Panc1 (cell line): ENCODE measurements at regions of chr3 and their contacts with region 1.

Region 1: GRCh38 chr3:47522082-47522987 is 8.8 kb upstream of the ELP6 start:
- DNase-seq: peak; percentile 68
- ATAC-seq: peak; percentile 95
- H3K4me3 ChIP-seq: no peak overlapping the region
- H3K27ac ChIP-seq: no peak overlapping the region
- H3K4me1 ChIP-seq: no peaks in the 10 kb centered on the region
- H3K27me3 ChIP-seq: no peaks in the 10 kb centered on the region
- CTCF ChIP-seq: peak; percentile 83

Region 2: GRCh38 chr3:47594792-47595191 is 72.5 kb after region 1 on chr3:
- CTCF ChIA-PET with region 1: no interaction called
- POLR2A ChIA-PET with region 1: no interaction called
- in situ Hi-C with region 1: no loop called
- intact Hi-C with region 1: loop called (anchors 10 kb)
- DNase-seq: no peak
- ATAC-seq: no peak
- H3K4me3 ChIP-seq: no peak overlapping the region
- H3K27ac ChIP-seq: no peak overlapping the region
- H3K4me1 ChIP-seq: no peaks in the 10 kb centered on the region
- H3K27me3 ChIP-seq: no peaks in the 10 kb centered on the region
- CTCF ChIP-seq: no peak

Region 3: GRCh38 chr3:47781685-47782445 is 259.5 kb after region 1 on chr3 and contains the start of gene SMARCC1:
- CTCF ChIA-PET with region 1: no interaction called
- POLR2A ChIA-PET with region 1: interaction called, 14 read pairs
- in situ Hi-C with region 1: no loop called
- intact Hi-C with region 1: loop called (anchors 5 kb)
- DNase-seq: peak; percentile 67
- ATAC-seq: peak; percentile 97
- H3K4me3 ChIP-seq: peak within 1 kb of the TSS; percentile 68 to 86
- H3K27ac ChIP-seq: peak within 1 kb of the TSS; percentile 93
- H3K4me1 ChIP-seq: peaks cover 6% of the 10 kb centered on the region; the same call in 1 of the 2 replicates
- H3K27me3 ChIP-seq: no peaks in the 10 kb centered on the region
- CTCF ChIP-seq: no peak
- total RNA-seq, gene SMARCC1: 84.2 TPM